ENCODE measurements at regions of chr12 and their contacts with region 1.

Region 1: GRCh38 chr12:114476159-114476558 is 70.2 kb upstream of the TBX5 start:
- DNase-seq: peak; percentile 36
- H3K4me3 Mint-ChIP-seq: no peak overlapping the region
- H3K27ac Mint-ChIP-seq: no peak overlapping the region
- H3K4me1 Mint-ChIP-seq: peaks cover 2% of the 10 kb centered on the region
- H3K27me3 Mint-ChIP-seq: peaks cover 58% of the 10 kb centered on the region
- CTCF ChIP-seq: peak; percentile 46

Region 2: GRCh38 chr12:114013575-114014345 is 462.4 kb before region 1 on chr12:
- CTCF ChIA-PET with region 1: interaction called, 5 read pairs
- POLR2A ChIA-PET with region 1: no interaction called
- intact Hi-C with region 1: loop called (anchors 1 kb)
- DNase-seq: peak; percentile 45
- H3K4me3 Mint-ChIP-seq: no peak overlapping the region
- H3K27ac Mint-ChIP-seq: no peak overlapping the region
- H3K4me1 Mint-ChIP-seq: peaks cover 8% of the 10 kb centered on the region
- H3K27me3 Mint-ChIP-seq: peaks cover 35% of the 10 kb centered on the region
- CTCF ChIP-seq: peak; percentile 31

Region 3: DNA sequence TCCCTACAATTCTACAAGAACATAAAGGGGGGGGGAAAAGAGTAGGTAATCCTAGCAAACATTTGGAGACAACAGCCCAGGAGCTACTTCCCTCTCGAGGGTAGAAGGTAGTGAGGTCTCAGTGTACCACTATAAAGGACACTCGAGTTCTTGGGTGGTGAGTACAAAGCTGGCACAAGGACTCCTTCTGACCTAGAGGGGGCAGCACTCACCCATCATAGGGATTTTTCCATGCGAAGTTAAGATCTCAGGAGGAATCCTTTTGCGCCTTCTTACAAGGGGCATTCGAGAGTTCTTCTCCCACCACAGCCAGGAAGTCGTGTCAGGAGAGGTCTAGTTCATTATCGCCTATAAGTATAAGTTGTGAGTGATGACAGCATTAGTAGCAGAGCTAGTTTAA is 309.8 kb before region 1 on chr12:
- CTCF ChIA-PET with region 1: interaction called, 8 read pairs
- POLR2A ChIA-PET with region 1: no interaction called
- intact Hi-C with region 1: loop called (anchors 5 kb)
- DNase-seq: peak; percentile 60
- H3K4me3 Mint-ChIP-seq: no peak overlapping the region
- H3K27ac Mint-ChIP-seq: no peak overlapping the region
- H3K4me1 Mint-ChIP-seq: peaks cover 21% of the 10 kb centered on the region
- H3K27me3 Mint-ChIP-seq: no peaks in the 10 kb centered on the region
- CTCF ChIP-seq: peak; percentile 28

Region 4: GRCh38 chr12:114529966-114530365 is 53.8 kb after region 1 on chr12:
- CTCF ChIA-PET with region 1: no interaction called
- POLR2A ChIA-PET with region 1: no interaction called
- intact Hi-C with region 1: no loop called
- DNase-seq: no peak
- H3K4me3 Mint-ChIP-seq: no peak overlapping the region
- H3K27ac Mint-ChIP-seq: no peak overlapping the region
- H3K4me1 Mint-ChIP-seq: no peaks in the 10 kb centered on the region
- H3K27me3 Mint-ChIP-seq: peaks cover 2% of the 10 kb centered on the region
- CTCF ChIP-seq: no peak

Measured in MCF 10A (cell line).